Naive thymus-derived CD4-positive, alpha-beta T cell (primary cell): ENCODE measurements at regions of chr12 and their contacts with region 1.

Region 1: GRCh38 chr12:10673660-10674384 is at the start of gene STYK1:
- DNase-seq: peak; percentile 40 to 68 (median 59)
- ATAC-seq: peak; percentile 90
- H3K4me3 ChIP-seq: peak within 1 kb of the TSS; percentile 45
- H3K4me3 Mint-ChIP-seq: peak within 1 kb of the TSS; percentile 66 to 85 (median 80)
- H3K27ac ChIP-seq: no peak within 1 kb of the TSS
- H3K27ac Mint-ChIP-seq: peak within 1 kb of the TSS in 5 of 9 donors; percentile 22 to 83 (median 60)
- H3K4me1 ChIP-seq: peaks cover 8 to 18% of the 10 kb centered on the region in 2 donors
- H3K4me1 Mint-ChIP-seq: peaks cover 20 to 64% (median 32%) of the 10 kb centered on the region in 7 donors
- H3K27me3 ChIP-seq: peaks cover 0 to 8% of the 10 kb centered on the region in 2 donors
- H3K27me3 Mint-ChIP-seq: peaks cover 30 to 60% (median 45%) of the 10 kb centered on the region in 5 donors
- total RNA-seq, gene STYK1: 0.24 to 1.6 (median 0.34) TPM in 3 of 5 experiments, not detected in the others

Region 2: DNA sequence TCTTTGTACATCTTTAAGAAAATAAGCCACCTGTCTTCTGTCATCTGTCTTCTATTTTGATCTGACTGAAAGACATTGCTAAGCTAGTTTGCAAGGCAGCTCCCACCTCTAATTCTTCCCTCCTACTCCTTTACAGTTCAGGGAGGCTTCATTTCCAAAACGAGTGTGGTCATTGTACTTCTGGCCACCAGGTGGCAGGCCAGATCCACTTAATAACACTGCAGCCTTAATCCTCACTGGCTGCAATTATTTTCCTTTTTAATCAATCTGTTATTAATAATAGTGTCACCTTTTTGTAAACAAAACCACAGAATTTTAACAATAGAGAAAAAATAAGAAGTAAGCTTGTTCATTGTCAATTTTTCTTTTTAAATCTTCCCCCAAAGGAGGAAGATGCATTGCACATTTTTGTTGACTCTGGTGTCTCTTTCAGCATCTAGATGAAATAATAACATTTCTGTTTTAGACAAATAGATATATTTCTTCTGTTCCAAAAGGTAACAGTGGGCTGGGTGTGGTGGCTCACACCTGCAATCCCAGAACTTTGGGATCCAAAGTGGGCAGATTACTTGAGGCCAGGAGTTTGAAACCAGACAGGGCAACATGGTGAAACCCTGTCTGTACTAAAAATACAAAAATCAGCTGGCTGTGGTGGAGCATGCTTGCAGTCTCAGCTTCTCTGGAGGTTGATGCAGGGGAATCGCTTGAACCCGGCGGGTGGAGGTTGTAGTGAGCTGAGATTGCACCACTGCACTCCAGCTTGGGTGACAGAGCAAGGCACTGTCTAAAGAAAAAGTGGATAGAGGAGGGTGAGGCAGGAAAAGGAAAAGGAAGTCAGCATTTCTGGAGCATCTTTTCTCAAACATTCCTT is 437.8 kb before region 1 on chr12:
- CTCF ChIA-PET with region 1: interaction called, 5 read pairs
- POLR2A ChIA-PET with region 1: no interaction called
- intact Hi-C with region 1: loop called (anchors 1 kb)
- DNase-seq: peak in 7 of 9 donors; percentile 16 to 46 (median 43)
- ATAC-seq: peak; percentile 84
- H3K4me3 ChIP-seq: no peak overlapping the region
- H3K4me3 Mint-ChIP-seq: no peak overlapping the region
- H3K27ac ChIP-seq: no peak overlapping the region
- H3K27ac Mint-ChIP-seq: no peak overlapping the region
- H3K4me1 ChIP-seq: peaks cover 0 to 16% of the 10 kb centered on the region in 2 donors
- H3K4me1 Mint-ChIP-seq: peaks cover 0 to 5% (median 0%) of the 10 kb centered on the region in 7 donors
- H3K27me3 ChIP-seq: no peaks in the 10 kb centered on the region
- H3K27me3 Mint-ChIP-seq: peaks cover 0 to 25% (median 0%) of the 10 kb centered on the region in 5 donors

Region 3: GRCh38 chr12:10562306-10562933 is 111.4 kb before region 1 on chr12:
- CTCF ChIA-PET with region 1: no interaction called
- POLR2A ChIA-PET with region 1: no interaction called
- intact Hi-C with region 1: loop called in 1 of 2 experiments (anchors 1 kb)
- DNase-seq: peak in 7 of 9 donors; percentile 5 to 54 (median 40)
- ATAC-seq: peak; percentile 51
- H3K4me3 ChIP-seq: no peak overlapping the region
- H3K4me3 Mint-ChIP-seq: no peak overlapping the region
- H3K27ac ChIP-seq: no peak overlapping the region
- H3K27ac Mint-ChIP-seq: no peak overlapping the region
- H3K4me1 ChIP-seq: peaks cover 0 to 28% of the 10 kb centered on the region in 2 donors
- H3K4me1 Mint-ChIP-seq: peaks cover 0 to 16% (median 10%) of the 10 kb centered on the region in 7 donors
- H3K27me3 ChIP-seq: no peaks in the 10 kb centered on the region
- H3K27me3 Mint-ChIP-seq: peaks cover 7 to 40% (median 16%) of the 10 kb centered on the region in 5 donors

Region 4: GRCh38 chr12:10701131-10701681 is 27.4 kb after region 1 on chr12:
- CTCF ChIA-PET with region 1: no interaction called
- POLR2A ChIA-PET with region 1: no interaction called
- intact Hi-C with region 1: loop called in 1 of 2 experiments (anchors 2 kb)
- DNase-seq: peak in 1 of 9 donors; percentile 38
- ATAC-seq: peak; percentile 49
- H3K4me3 ChIP-seq: no peak overlapping the region
- H3K4me3 Mint-ChIP-seq: peak overlapping the region in 3 of 10 donors; percentile 11 to 50 (median 50)
- H3K27ac ChIP-seq: no peak overlapping the region
- H3K27ac Mint-ChIP-seq: peak overlapping the region in 3 of 9 donors; percentile 57 to 73 (median 68)
- H3K4me1 ChIP-seq: peaks cover 0 to 10% of the 10 kb centered on the region in 2 donors
- H3K4me1 Mint-ChIP-seq: peaks cover 0 to 15% (median 12%) of the 10 kb centered on the region in 7 donors
- H3K27me3 ChIP-seq: no peaks in the 10 kb centered on the region
- H3K27me3 Mint-ChIP-seq: no peaks in the 10 kb centered on the region

Region 5: GRCh38 chr12:10749700-10750384 is 76.0 kb after region 1 on chr12:
- CTCF ChIA-PET with region 1: no interaction called
- POLR2A ChIA-PET with region 1: no interaction called
- intact Hi-C with region 1: loop called (anchors 1 to 5 kb)
- DNase-seq: peak; percentile 22 to 79 (median 67)
- ATAC-seq: peak; percentile 100
- H3K4me3 ChIP-seq: peak overlapping the region; percentile 1
- H3K4me3 Mint-ChIP-seq: peak overlapping the region in 8 of 10 donors; percentile 15 to 76 (median 64)
- H3K27ac ChIP-seq: no peak overlapping the region
- H3K27ac Mint-ChIP-seq: peak overlapping the region in 4 of 9 donors; percentile 7 to 60 (median 34)
- H3K4me1 ChIP-seq: peaks cover 0 to 4% of the 10 kb centered on the region in 2 donors
- H3K4me1 Mint-ChIP-seq: peaks cover 0 to 24% (median 6%) of the 10 kb centered on the region in 7 donors
- H3K27me3 ChIP-seq: peaks cover 0 to 4% of the 10 kb centered on the region in 2 donors
- H3K27me3 Mint-ChIP-seq: peaks cover 32 to 57% (median 33%) of the 10 kb centered on the region in 5 donors

Region 6: GRCh38 chr12:10802587-10802986 is 128.8 kb after region 1 on chr12 and contains the start of gene TAS2R7:
- CTCF ChIA-PET with region 1: no interaction called
- POLR2A ChIA-PET with region 1: no interaction called
- intact Hi-C with region 1: no loop called
- DNase-seq: no peak
- ATAC-seq: no peak
- H3K4me3 ChIP-seq: no peak within 1 kb of the TSS
- H3K4me3 Mint-ChIP-seq: no peak within 1 kb of the TSS
- H3K27ac ChIP-seq: no peak within 1 kb of the TSS
- H3K27ac Mint-ChIP-seq: no peak within 1 kb of the TSS
- H3K4me1 ChIP-seq: no peaks in the 10 kb centered on the region
- H3K4me1 Mint-ChIP-seq: no peaks in the 10 kb centered on the region
- H3K27me3 ChIP-seq: no peaks in the 10 kb centered on the region
- H3K27me3 Mint-ChIP-seq: peaks cover 23 to 36% (median 31%) of the 10 kb centered on the region in 5 donors
- total RNA-seq, gene TAS2R7: not detected